ENCODE measurements at regions of chr5 and their contacts with region 1.

Region 1: DNA sequence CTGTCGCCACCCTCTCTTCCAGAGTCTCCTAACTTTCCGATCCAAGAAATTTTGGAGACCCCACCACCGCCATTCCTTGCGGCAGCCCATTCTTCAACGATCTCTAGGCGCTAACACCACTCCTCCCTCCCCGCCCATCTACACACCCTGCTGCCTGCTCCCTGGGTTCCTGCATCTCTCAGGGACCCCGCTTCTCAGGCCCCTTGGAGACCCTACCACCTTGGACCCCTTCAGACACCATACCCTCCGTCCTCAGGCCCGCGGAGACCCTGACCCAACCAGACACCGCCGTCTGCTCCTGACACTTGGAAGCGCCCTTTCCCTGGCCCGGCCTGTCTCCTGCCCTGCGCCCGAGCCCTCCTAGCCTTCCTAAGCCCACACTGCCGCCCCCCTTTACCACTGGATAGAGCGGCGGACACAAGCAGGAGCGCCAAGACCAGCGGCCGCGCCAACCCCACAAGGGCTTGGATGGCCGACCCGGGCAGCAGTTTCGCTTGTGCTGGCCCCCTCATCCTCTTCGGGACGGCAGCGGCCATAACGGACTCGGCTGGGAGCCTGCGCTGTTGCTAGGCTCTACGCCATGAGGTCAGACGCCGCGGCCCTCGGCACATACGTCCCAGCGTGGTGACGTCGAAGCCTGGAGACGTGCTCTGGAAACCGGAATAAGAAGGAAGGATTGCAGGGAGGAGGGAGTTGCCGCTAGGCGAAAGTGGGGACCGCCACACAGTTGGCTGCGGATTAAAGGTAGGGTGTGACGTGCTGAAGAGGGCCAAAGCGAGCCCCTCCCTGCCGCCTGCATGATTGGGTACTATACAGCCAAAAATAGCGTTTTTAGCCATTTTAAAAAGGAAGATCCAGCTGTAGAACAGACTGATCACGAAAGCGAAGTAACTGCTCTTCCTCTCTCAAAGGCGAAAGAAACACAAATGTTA is at the start of gene C5orf15:
- DNase-seq: peak; percentile 72 to 93 (median 87)
- ATAC-seq: peak; percentile 98
- H3K4me3 ChIP-seq: peak within 1 kb of the TSS; percentile 90
- H3K4me3 Mint-ChIP-seq: peak within 1 kb of the TSS; percentile 93 to 100 (median 98)
- H3K27ac ChIP-seq: peak within 1 kb of the TSS; percentile 94
- H3K27ac Mint-ChIP-seq: peak within 1 kb of the TSS; percentile 92 to 99 (median 97)
- H3K4me1 ChIP-seq: peaks cover 10 to 16% of the 10 kb centered on the region in 2 donors
- H3K4me1 Mint-ChIP-seq: peaks cover 21 to 63% (median 52%) of the 10 kb centered on the region in 7 donors
- H3K27me3 ChIP-seq: no peaks in the 10 kb centered on the region
- H3K27me3 Mint-ChIP-seq: no peaks in the 10 kb centered on the region
- total RNA-seq, gene C5orf15: 11.1 to 33.6 (median 17.9) TPM

Region 2: DNA sequence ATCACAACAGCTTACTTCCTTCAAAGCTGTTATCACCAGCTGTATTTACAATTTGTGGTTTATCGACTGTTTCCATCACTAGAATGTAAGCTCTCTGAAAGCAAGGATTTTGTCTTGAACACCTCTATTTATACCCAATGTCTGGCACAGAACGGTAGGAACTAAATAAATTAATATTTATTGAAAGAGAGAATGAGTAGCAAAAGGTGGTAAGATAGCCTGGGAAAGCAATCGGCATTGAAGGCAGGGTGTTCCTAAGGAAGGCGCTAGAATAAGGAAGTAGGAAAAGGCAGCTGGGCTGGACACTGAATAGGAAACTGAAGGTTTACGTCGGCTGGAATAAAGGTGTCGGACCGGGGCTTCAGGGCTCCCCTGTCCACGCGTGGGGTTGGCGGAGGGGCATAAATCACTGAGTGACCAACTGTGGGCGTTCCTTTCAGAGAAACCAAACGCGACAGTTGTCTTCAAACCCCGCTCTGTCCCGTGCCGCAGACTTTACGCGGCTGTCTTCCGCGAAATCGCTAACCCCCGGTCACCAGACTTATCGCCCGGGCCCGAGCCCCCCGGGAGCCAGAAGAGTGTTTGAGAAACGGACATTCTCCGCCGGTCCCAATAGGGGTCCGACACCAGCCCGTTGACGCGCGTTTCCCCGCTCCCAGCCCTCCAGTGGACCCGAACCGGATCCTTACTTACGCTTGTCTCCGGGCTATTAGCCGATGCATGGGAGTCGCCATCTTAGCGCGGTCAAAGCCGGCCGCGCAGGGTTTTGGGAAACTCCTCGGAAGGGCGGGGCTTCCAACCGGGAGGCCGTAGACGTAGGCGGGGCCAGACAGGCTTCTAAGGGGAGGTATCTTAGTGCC is 942.3 kb before region 1 on chr5 and contains the start of gene ZCCHC10:
- CTCF ChIA-PET with region 1: no interaction called
- POLR2A ChIA-PET with region 1: no interaction called
- intact Hi-C with region 1: loop called in 1 of 2 experiments (anchors 2 kb)
- DNase-seq: peak; percentile 75 to 90 (median 84)
- ATAC-seq: peak; percentile 100
- H3K4me3 ChIP-seq: peak within 1 kb of the TSS; percentile 99
- H3K4me3 Mint-ChIP-seq: peak within 1 kb of the TSS; percentile 92 to 98 (median 94)
- H3K27ac ChIP-seq: peak within 1 kb of the TSS; percentile 96
- H3K27ac Mint-ChIP-seq: peak within 1 kb of the TSS; percentile 85 to 98 (median 94)
- H3K4me1 ChIP-seq: peaks cover 4% of the 10 kb centered on the region in 2 donors
- H3K4me1 Mint-ChIP-seq: peaks cover 14 to 37% (median 26%) of the 10 kb centered on the region in 7 donors
- H3K27me3 ChIP-seq: no peaks in the 10 kb centered on the region
- H3K27me3 Mint-ChIP-seq: peaks cover 0 to 8% (median 0%) of the 10 kb centered on the region in 5 donors
- total RNA-seq, gene ZCCHC10: 16.0 to 32.9 (median 18.2) TPM

Region 3: DNA sequence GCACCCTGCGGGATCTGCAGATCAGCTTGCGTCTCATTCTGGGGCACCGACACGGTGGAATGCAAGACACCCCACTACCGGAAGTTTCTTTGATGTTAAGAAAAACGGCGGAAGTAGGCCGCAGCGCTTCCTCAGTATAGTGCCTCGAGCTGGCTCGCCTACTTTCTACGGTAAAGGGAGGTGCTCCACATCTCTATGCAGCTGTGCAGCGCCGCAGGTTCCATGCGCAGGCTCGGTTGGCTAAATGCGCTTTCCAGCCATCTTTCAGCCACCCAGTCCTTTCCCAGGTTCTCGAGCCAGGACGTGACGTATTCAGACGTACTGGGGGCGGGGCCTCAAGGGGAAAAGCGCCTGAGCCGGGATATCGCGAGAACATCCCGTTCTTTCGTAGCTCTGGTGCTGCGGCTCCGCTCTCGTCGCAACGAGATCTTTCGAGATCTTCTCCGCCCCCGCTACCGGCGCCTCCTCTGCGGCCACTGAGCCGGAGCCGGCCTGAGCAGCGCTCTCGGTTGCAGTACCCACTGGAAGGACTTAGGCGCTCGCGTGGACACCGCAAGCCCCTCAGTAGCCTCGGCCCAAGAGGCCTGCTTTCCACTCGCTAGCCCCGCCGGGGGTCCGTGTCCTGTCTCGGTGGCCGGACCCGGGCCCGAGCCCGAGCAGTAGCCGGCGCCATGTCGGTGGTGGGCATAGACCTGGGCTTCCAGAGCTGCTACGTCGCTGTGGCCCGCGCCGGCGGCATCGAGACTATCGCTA is 916.6 kb before region 1 on chr5 and contains the start of gene HSPA4:
- CTCF ChIA-PET with region 1: no interaction called
- POLR2A ChIA-PET with region 1: no interaction called
- intact Hi-C with region 1: loop called (anchors 1 kb)
- DNase-seq: peak; percentile 86 to 99 (median 98)
- ATAC-seq: peak; percentile 91
- H3K4me3 ChIP-seq: peak within 1 kb of the TSS; percentile 92
- H3K4me3 Mint-ChIP-seq: peak within 1 kb of the TSS; percentile 91 to 99 (median 98)
- H3K27ac ChIP-seq: peak within 1 kb of the TSS; percentile 98
- H3K27ac Mint-ChIP-seq: peak within 1 kb of the TSS; percentile 99 to 100 (median 100)
- H3K4me1 ChIP-seq: peaks cover 17 to 19% of the 10 kb centered on the region in 2 donors
- H3K4me1 Mint-ChIP-seq: peaks cover 31 to 70% (median 52%) of the 10 kb centered on the region in 7 donors
- H3K27me3 ChIP-seq: no peaks in the 10 kb centered on the region
- H3K27me3 Mint-ChIP-seq: no peaks in the 10 kb centered on the region
- total RNA-seq, gene HSPA4: 42.1 to 103 (median 50.0) TPM

Region 4: DNA sequence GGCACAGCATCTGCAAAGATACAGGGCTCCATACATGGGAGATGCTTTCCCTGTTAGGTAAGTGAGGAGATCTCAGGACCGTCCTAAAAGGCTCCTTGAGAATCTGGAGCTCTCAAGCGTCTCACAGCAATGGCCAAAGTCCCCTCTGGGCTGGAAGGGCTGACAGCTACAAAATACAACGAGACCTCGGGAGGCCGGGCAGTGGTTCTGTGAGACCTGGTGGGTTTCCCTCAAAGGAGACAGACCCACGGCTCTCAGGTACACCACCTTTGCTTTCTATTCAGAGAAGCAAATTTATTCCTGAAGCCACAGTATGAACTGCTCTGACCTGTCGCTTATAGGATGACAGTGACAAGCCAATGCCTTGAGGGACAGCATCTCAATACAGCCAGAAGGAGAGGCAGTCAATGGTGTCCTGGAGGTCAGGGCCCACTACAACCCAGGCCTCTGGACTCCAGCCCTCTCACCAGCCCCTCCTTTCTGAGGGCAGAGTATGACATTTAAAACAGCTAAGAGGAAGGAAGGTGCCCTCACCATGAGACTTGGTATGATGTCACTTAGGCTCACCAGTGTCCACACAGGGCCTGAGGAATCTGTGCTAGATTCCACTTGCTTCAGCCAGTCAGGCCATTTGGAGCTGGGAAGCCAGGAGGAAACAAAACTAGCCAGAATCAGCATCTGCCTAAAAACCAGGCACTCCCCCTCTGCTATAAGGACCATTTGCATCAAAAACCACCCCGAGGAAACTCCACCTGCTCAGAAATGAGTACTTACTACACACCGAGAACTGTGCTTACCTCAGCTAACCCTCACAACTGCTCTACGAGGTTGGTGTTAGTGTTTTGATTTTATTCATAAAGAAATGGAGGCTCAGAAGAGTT is 269.4 kb before region 1 on chr5:
- CTCF ChIA-PET with region 1: no interaction called
- POLR2A ChIA-PET with region 1: no interaction called
- intact Hi-C with region 1: no loop called
- DNase-seq: no peak
- ATAC-seq: no peak
- H3K4me3 ChIP-seq: no peak overlapping the region
- H3K4me3 Mint-ChIP-seq: no peak overlapping the region
- H3K27ac ChIP-seq: no peak overlapping the region
- H3K27ac Mint-ChIP-seq: no peak overlapping the region
- H3K4me1 ChIP-seq: no peaks in the 10 kb centered on the region
- H3K4me1 Mint-ChIP-seq: peaks cover 0 to 7% (median 3%) of the 10 kb centered on the region in 7 donors
- H3K27me3 ChIP-seq: no peaks in the 10 kb centered on the region
- H3K27me3 Mint-ChIP-seq: peaks cover 0 to 5% (median 0%) of the 10 kb centered on the region in 5 donors

Region 5: DNA sequence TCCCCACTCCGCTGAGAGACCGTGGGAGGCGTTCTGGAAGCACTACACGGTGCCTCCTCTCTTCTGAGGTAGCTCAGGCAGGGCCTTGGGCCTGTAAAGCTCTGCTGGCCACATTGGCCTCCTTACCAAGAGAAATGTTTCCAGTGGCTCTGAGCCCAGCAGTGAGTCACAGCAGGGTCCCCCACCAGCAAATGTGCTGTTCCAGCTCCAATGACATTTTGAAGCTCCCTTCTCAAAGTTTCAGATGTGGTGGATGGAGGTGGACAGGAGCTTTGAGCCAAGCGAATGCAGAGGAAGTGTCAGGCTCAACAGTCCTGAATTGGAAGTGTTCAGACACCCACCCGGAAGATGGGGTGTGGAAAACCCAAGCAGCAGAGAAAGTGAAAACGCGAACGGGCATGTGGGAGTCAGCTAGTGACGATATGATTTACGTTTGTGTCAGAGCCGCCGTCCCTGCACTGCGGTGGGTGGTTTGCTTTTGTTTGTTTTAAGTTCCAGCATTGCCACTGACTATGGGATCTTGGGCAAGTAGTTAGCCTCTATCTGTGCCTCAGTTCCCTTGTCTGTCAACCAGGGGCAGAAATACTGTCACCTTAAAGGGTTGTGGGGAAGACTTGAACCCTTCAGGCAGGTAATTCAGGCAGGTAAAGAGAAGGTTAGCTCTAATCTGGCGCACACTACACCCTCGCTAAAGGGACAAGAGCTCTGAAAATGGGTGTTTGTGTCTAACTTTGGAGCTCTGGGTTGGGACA is 38.1 kb before region 1 on chr5:
- CTCF ChIA-PET with region 1: no interaction called
- POLR2A ChIA-PET with region 1: no interaction called
- intact Hi-C with region 1: loop called in 1 of 2 experiments (anchors 2 kb)
- DNase-seq: peak in 8 of 9 donors; percentile 29 to 75 (median 59)
- ATAC-seq: peak; percentile 74
- H3K4me3 ChIP-seq: peak overlapping the region; percentile 51
- H3K4me3 Mint-ChIP-seq: peak overlapping the region; percentile 73 to 91 (median 84)
- H3K27ac ChIP-seq: peak overlapping the region; percentile 69
- H3K27ac Mint-ChIP-seq: peak overlapping the region; percentile 86 to 97 (median 91)
- H3K4me1 ChIP-seq: peaks cover 4 to 8% of the 10 kb centered on the region in 2 donors
- H3K4me1 Mint-ChIP-seq: peaks cover 8 to 32% (median 19%) of the 10 kb centered on the region in 7 donors
- H3K27me3 ChIP-seq: no peaks in the 10 kb centered on the region
- H3K27me3 Mint-ChIP-seq: peaks cover 0 to 5% (median 0%) of the 10 kb centered on the region in 5 donors

Region 6: GRCh38 chr5:134004592-134005375 is 36.5 kb after region 1 on chr5 and contains the start of gene VDAC1:
- CTCF ChIA-PET with region 1: no interaction called
- POLR2A ChIA-PET with region 1: interaction called, 10 read pairs
- intact Hi-C with region 1: loop called (anchors 1 kb)
- DNase-seq: peak; percentile 74 to 92 (median 89)
- ATAC-seq: peak; percentile 85
- H3K4me3 ChIP-seq: peak within 1 kb of the TSS; percentile 83
- H3K4me3 Mint-ChIP-seq: peak within 1 kb of the TSS; percentile 89 to 97 (median 92)
- H3K27ac ChIP-seq: peak within 1 kb of the TSS; percentile 98
- H3K27ac Mint-ChIP-seq: peak within 1 kb of the TSS; percentile 86 to 97 (median 96)
- H3K4me1 ChIP-seq: peaks cover 17 to 26% of the 10 kb centered on the region in 2 donors
- H3K4me1 Mint-ChIP-seq: peaks cover 25 to 47% (median 43%) of the 10 kb centered on the region in 7 donors
- H3K27me3 ChIP-seq: no peaks in the 10 kb centered on the region
- H3K27me3 Mint-ChIP-seq: no peaks in the 10 kb centered on the region
- total RNA-seq, gene VDAC1: 37.8 to 259 (median 43.7) TPM

Region 7: GRCh38 chr5:134873987-134874830 is 905.9 kb after region 1 on chr5 and contains the start of gene TXNDC15:
- CTCF ChIA-PET with region 1: no interaction called
- POLR2A ChIA-PET with region 1: no interaction called
- intact Hi-C with region 1: loop called in 1 of 2 experiments (anchors 1 kb)
- DNase-seq: peak; percentile 69 to 86 (median 78)
- ATAC-seq: peak; percentile 98
- H3K4me3 ChIP-seq: peak within 1 kb of the TSS; percentile 95
- H3K4me3 Mint-ChIP-seq: peak within 1 kb of the TSS; percentile 89 to 98 (median 94)
- H3K27ac ChIP-seq: peak within 1 kb of the TSS; percentile 88
- H3K27ac Mint-ChIP-seq: peak within 1 kb of the TSS; percentile 91 to 97 (median 95)
- H3K4me1 ChIP-seq: peaks cover 16 to 32% of the 10 kb centered on the region in 2 donors
- H3K4me1 Mint-ChIP-seq: peaks cover 31 to 51% (median 45%) of the 10 kb centered on the region in 7 donors
- H3K27me3 ChIP-seq: no peaks in the 10 kb centered on the region
- H3K27me3 Mint-ChIP-seq: no peaks in the 10 kb centered on the region
- total RNA-seq, gene TXNDC15: 24.2 to 71.3 (median 36.8) TPM